Dendritic cell treated with granulocyte-macrophage colony-stimulating factor and Interleukin-4, amounts not matched to agents 40 ng/mL and 50 ng/mL, for 4 days (primary cell): ENCODE measurements at regions of chr6 and their contacts with region 1.

Region 1: DNA sequence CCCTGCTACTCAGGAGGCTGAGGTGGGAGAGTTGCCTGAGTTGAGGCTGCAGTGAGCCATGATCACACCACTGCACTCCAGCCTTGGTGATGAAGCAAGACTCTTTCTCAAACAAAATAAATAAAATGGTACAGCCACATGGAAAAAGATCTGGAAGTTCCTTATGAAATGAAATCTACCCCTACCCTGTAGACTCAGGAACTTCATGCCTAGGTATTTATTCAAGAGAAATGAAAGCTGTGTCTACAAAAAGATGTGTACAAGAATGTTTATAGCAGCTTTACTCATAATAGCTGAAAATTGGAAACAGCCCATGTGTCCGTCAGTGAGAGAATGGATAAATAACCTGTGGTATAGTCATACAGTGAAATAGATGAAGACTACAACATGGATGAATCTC is 15.2 kb upstream of the C6orf62 start:
- H3K4me3 Mint-ChIP-seq: no peak overlapping the region
- H3K27ac Mint-ChIP-seq: peak overlapping the region; percentile 63
- H3K4me1 Mint-ChIP-seq: peaks cover 33% of the 10 kb centered on the region
- H3K27me3 Mint-ChIP-seq: no peaks in the 10 kb centered on the region

Region 2: DNA sequence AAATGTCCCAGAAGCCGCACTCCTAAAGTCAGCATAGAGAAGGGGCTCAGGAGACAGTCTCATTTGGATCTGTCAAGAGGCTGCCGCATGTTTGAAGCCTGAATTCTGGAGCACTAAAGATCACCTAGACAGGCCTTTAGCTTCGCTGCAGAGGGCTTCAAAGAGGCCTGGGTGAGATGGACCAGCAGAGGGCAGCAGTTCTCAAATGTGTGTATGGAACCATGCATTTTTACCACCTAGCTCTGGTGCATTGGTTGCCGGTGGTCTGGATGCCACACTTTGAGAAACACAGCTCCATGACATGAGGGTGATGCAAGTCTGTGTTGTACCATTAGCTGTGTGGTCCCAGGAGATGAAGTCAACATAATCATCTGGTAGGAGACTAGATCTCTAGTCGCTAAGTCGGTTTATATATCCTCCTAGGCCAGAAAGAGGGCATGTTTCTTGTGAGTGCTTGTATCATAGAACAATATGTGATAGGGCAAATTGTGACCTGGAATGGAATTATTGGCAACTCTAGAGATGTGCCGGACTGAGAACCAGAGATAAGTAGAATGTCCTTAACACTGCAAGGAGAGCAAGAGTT is 153.0 kb before region 1 on chr6:
- intact Hi-C with region 1: no loop called
- H3K4me3 Mint-ChIP-seq: no peak overlapping the region
- H3K27ac Mint-ChIP-seq: no peak overlapping the region
- H3K4me1 Mint-ChIP-seq: peaks cover 13% of the 10 kb centered on the region
- H3K27me3 Mint-ChIP-seq: no peaks in the 10 kb centered on the region

Region 3: GRCh38 chr6:24744911-24745310 is 10.7 kb after region 1 on chr6:
- intact Hi-C with region 1: loop called (anchors 1 kb)
- H3K4me3 Mint-ChIP-seq: no peak overlapping the region
- H3K27ac Mint-ChIP-seq: peak overlapping the region; percentile 99
- H3K4me1 Mint-ChIP-seq: peaks cover 78% of the 10 kb centered on the region
- H3K27me3 Mint-ChIP-seq: no peaks in the 10 kb centered on the region